ENCODE measurements at regions of chr19 and their contacts with region 1.

Region 1: GRCh38 chr19:14117668-14118164 is at the start of gene PRKACA:
- DNase-seq: peak; percentile 99
- H3K4me3 Mint-ChIP-seq: peak within 1 kb of the TSS; percentile 86
- H3K27ac Mint-ChIP-seq: peak within 1 kb of the TSS; percentile 78
- H3K4me1 Mint-ChIP-seq: peaks cover 43% of the 10 kb centered on the region
- H3K27me3 Mint-ChIP-seq: no peaks in the 10 kb centered on the region
- total RNA-seq, gene PRKACA: 48.2 to 60.0 TPM

Region 2: DNA sequence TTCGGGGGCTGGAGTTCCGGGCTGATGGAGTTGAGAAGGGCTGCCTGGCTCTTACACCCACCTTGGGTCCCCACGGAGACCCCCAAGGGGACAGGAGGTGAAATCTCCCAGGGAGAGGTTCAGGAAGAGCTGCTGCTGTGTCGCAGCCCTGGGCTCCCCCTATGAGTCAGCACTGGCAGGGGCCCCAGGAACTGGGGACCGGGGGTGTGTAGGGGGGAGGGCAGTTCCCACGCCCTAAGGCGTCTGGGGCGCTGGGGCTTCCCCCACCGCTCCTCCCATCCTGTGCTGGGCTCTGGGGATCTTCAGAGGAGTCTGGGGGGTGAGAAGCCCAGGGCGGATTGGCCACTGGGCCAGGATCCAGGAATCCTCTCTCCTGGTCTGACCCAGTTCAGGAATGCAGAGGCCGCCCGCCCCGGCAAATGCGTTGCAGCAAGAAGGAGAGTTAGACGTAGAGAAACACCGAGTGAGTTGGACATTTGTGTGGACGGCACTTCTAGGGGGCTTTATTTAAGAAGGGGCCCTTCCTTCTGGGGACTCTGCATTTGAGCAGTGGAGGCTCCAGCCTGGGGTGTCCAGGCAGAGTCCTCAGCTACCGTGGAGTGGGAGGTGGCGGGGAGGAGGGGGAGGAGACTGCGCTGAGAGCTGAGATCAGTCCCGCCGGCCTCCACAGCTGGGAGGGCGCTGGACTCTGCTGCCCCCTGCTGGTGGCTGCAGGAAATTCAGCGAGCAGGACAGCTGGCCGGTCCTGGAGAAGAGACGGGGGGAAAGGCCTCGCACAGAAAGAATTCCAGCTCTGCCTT is 255.8 kb before region 1 on chr19:
- CTCF ChIA-PET with region 1: no interaction called
- intact Hi-C with region 1: no loop called
- DNase-seq: peak; percentile 93
- H3K4me3 Mint-ChIP-seq: peak overlapping the region; percentile 96
- H3K27ac Mint-ChIP-seq: peak overlapping the region; percentile 99
- H3K4me1 Mint-ChIP-seq: peaks cover 29% of the 10 kb centered on the region
- H3K27me3 Mint-ChIP-seq: peaks cover 28% of the 10 kb centered on the region

Region 3: DNA sequence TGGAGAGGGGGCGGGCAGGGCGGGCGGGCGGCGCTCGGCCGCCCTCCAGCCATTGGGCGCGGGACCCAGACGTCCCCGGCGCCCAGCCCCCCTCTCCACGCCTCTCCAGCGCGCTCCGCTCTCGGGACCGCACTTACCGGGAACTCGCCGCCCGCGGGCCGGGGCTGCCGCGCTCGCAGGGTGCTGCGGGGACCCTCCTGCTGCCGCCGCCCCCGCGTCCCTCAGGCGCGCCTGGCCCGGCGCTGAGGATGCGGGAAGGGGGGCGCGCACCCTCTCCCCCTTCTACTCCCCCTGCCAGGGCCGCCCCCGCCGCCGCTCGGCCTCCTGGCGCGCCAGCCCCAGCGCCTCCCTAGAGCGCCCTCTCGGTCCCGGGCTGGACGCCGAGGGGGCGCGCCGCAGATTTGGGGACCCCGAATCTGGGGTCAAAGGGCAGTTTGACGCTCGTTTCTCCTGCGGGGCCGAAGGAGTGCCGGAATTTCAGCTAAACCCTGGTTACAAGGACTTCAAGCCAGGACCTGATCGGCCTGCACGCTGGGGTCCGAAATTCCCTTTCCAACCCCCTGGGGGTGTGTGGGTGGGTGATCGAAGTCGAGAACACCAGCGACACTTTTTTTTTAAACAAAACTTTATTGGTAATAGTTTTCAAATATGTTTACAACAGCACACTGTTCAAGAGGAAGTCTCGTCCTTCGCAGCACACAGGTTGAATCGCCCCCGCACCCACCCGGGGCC is 26.5 kb before region 1 on chr19:
- CTCF ChIA-PET with region 1: interaction called, 5 read pairs
- intact Hi-C with region 1: loop called (anchors 1 kb)
- DNase-seq: peak; percentile 78
- H3K4me3 Mint-ChIP-seq: peak overlapping the region; percentile 96
- H3K27ac Mint-ChIP-seq: peak overlapping the region; percentile 97
- H3K4me1 Mint-ChIP-seq: peaks cover 24% of the 10 kb centered on the region
- H3K27me3 Mint-ChIP-seq: no peaks in the 10 kb centered on the region

Region 4: GRCh38 chr19:14175351-14175792 is 57.7 kb after region 1 on chr19:
- CTCF ChIA-PET with region 1: no interaction called
- intact Hi-C with region 1: no loop called
- DNase-seq: no peak
- H3K4me3 Mint-ChIP-seq: no peak overlapping the region
- H3K27ac Mint-ChIP-seq: no peak overlapping the region
- H3K4me1 Mint-ChIP-seq: peaks cover 4% of the 10 kb centered on the region
- H3K27me3 Mint-ChIP-seq: no peaks in the 10 kb centered on the region

Region 5: DNA sequence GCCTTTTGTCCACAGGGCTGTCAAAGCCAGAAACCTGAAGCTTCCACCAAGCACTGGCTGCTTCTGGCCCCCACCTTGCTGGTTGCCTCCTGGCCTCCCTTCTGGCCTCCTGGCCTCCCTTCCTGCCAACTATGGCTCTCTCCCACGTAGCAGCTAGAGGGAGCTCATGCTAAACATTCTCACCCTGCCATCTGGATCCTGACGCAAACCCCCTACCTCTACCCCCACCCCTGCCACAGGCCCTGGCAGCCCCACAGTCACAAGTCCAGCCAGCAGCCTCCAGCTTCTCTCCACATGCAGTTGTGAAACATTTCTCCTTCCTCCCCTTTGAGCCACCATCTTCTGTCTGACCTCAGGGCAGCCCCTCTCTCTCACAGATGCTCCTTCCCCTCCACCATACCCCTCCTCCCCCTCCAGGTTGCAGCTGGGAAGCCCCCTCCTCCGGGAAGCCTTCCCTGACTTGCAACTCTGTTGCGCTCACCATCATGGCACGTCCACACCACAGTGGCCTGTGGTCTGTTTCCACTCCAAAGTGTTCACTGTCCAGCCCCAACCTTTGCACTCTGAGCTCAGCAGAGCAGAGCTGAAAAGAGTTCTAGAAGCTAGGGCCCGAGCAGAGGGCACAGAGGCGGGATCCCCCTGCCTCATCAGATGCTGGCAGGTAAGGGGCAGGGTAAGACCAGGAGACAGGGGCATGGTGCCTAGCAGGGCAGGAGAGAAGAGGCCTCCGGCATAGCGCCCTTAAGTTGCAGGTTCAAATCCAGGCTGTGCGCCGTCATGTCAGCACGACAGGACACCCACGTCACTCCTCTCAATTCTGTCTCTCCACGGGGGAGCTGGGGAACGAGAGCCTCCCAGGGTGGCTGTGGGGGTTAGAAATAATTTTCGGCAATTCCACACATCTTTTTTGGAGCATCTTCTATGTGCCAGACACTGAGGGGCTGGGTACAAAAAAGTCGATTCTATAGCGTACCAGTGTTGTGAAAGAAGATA is 81.0 kb after region 1 on chr19:
- CTCF ChIA-PET with region 1: no interaction called
- intact Hi-C with region 1: no loop called
- DNase-seq: no peak
- H3K4me3 Mint-ChIP-seq: no peak overlapping the region
- H3K27ac Mint-ChIP-seq: no peak overlapping the region
- H3K4me1 Mint-ChIP-seq: peaks cover 22% of the 10 kb centered on the region
- H3K27me3 Mint-ChIP-seq: no peaks in the 10 kb centered on the region